Activated naive CD4-positive, alpha-beta T cell treated with anti-CD3 and anti-CD28 coated beads for 36 hours (primary cell): ENCODE measurements at regions of chr16 and their contacts with region 1.

Region 1: GRCh38 chr16:14632692-14633569 is at the start of gene BFAR:
- DNase-seq: peak; percentile 98
- H3K4me3 Mint-ChIP-seq: peak within 1 kb of the TSS; percentile 100
- H3K27ac Mint-ChIP-seq: peak within 1 kb of the TSS; percentile 96
- H3K4me1 Mint-ChIP-seq: peaks cover 57% of the 10 kb centered on the region
- H3K27me3 Mint-ChIP-seq: no peaks in the 10 kb centered on the region
- total RNA-seq, gene BFAR: 41.9 to 44.6 TPM

Region 2: GRCh38 chr16:14309001-14309886 is 323.7 kb before region 1 on chr16:
- CTCF ChIA-PET with region 1: no interaction called
- intact Hi-C with region 1: loop called (anchors 5 kb)
- DNase-seq: peak; percentile 67
- H3K4me3 Mint-ChIP-seq: peak overlapping the region; percentile 58
- H3K27ac Mint-ChIP-seq: peak overlapping the region; percentile 50
- H3K4me1 Mint-ChIP-seq: peaks cover 50% of the 10 kb centered on the region
- H3K27me3 Mint-ChIP-seq: no peaks in the 10 kb centered on the region

Region 3: GRCh38 chr16:14354551-14355351 is 278.2 kb before region 1 on chr16:
- CTCF ChIA-PET with region 1: no interaction called
- intact Hi-C with region 1: loop called (anchors 1 kb)
- DNase-seq: peak; percentile 81
- H3K4me3 Mint-ChIP-seq: peak overlapping the region; percentile 46
- H3K27ac Mint-ChIP-seq: no peak overlapping the region
- H3K4me1 Mint-ChIP-seq: peaks cover 10% of the 10 kb centered on the region
- H3K27me3 Mint-ChIP-seq: peaks cover 5% of the 10 kb centered on the region

Region 4: DNA sequence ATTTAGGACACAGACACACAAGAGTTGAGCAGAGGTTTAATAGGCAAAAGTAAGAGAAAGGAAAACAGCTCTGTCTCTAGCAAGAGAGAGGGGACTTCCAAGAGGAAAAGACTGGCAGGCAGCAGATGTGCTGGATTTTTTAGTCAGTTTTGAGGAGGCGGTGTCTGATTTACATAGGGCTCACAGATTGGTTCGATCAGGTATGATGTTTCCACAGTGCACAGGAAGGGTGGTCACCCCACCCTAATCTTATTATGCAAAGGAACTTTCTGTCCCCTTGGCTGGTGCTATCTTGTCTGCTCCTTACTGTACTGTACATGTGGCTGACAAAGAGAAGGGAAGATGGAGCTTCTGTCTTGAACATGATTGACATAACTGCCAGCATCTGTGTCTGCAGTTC is 25.1 kb after region 1 on chr16:
- CTCF ChIA-PET with region 1: no interaction called
- intact Hi-C with region 1: loop called (anchors 1 kb)
- DNase-seq: peak; percentile 15
- H3K4me3 Mint-ChIP-seq: no peak overlapping the region
- H3K27ac Mint-ChIP-seq: peak overlapping the region; percentile 79
- H3K4me1 Mint-ChIP-seq: peaks cover 4% of the 10 kb centered on the region
- H3K27me3 Mint-ChIP-seq: no peaks in the 10 kb centered on the region

Region 5: DNA sequence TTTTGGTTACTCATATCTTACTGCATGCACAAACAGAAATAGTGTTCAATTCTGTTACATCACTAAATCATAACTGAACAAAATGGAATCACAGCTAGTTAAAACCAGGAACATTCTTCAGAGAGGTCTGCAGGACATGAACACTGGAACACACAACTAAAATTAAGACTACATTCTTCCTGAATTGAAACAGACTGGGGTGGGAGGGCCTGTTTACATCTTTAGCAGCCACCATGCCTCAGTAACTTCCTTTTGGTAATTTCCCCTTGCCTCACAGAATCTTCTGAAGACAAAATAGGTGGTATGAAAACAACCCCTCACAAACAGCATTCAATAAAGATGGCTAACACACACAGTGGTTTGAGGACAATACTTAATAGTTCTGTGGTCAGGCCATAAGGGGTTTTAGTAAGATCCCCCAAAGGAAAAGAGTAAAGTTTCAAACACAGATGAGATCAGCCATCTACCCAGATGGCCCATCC is 1003.5 kb after region 1 on chr16:
- CTCF ChIA-PET with region 1: no interaction called
- intact Hi-C with region 1: loop called (anchors 5 kb)
- DNase-seq: peak; percentile 27
- H3K4me3 Mint-ChIP-seq: no peak overlapping the region
- H3K27ac Mint-ChIP-seq: peak overlapping the region; percentile 88
- H3K4me1 Mint-ChIP-seq: peaks cover 77% of the 10 kb centered on the region
- H3K27me3 Mint-ChIP-seq: no peaks in the 10 kb centered on the region

Region 6: GRCh38 chr16:15961060-15961511 is 1328.2 kb after region 1 on chr16:
- CTCF ChIA-PET with region 1: no interaction called
- intact Hi-C with region 1: loop called (anchors 5 kb)
- DNase-seq: peak; percentile 93
- H3K4me3 Mint-ChIP-seq: peak overlapping the region; percentile 81
- H3K27ac Mint-ChIP-seq: peak overlapping the region; percentile 99
- H3K4me1 Mint-ChIP-seq: peaks cover 81% of the 10 kb centered on the region
- H3K27me3 Mint-ChIP-seq: no peaks in the 10 kb centered on the region